Activated CD4-positive, alpha-beta memory T cell treated with anti-CD3 and anti-CD28 coated beads for 36 hours (primary cell): ENCODE measurements at regions of chrX and their contacts with region 1.

Region 1: DNA sequence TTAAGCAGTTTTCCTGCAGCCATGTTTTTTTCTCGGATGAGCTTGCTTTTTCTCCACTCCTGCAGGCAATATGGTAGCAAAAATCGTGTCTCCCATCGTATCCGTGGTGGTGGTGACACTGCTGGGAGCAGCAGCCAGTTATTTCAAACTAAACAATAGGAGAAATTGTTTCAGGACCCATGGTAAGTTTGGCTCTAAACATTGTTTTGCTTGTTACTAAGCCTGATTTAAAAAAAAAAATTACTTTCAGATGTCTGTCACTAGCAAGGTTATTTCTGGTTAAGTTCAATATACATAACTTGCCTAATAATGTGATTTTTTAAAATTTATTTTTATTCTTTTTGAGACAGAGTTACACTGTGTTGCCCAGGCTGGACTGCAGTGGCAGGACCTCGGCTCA is 17.5 kb upstream of the GYG2 start:
- DNase-seq: no peak
- H3K4me3 Mint-ChIP-seq: no peak overlapping the region
- H3K27ac Mint-ChIP-seq: no peak overlapping the region
- H3K4me1 Mint-ChIP-seq: peaks cover 7% of the 10 kb centered on the region
- H3K27me3 Mint-ChIP-seq: no peaks in the 10 kb centered on the region

Region 2: DNA sequence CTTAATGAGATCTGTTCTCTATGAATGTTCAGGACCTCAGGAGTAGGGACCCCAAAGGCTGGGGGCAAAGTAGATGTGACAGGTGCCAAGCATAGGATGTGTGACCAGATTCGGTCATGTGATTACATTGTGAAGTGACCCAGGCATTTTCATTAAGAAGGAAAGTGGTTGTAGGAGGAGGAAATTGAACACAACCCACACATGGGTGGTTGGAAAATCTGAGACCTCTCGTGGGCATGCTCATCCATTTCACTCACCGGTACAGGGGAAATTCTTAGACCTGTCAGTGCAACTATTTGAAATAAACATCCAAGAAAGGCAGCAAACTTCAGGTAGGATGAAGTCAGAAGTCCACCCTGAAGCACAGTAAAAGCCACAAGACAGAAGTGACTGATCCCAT is 163.6 kb before region 1 on chrX:
- CTCF ChIA-PET with region 1: no interaction called
- POLR2A ChIA-PET with region 1: no interaction called
- intact Hi-C with region 1: loop called (anchors 1 kb)
- DNase-seq: peak; percentile 56
- H3K4me3 Mint-ChIP-seq: no peak overlapping the region
- H3K27ac Mint-ChIP-seq: peak overlapping the region; percentile 40
- H3K4me1 Mint-ChIP-seq: peaks cover 18% of the 10 kb centered on the region
- H3K27me3 Mint-ChIP-seq: no peaks in the 10 kb centered on the region

Region 3: DNA sequence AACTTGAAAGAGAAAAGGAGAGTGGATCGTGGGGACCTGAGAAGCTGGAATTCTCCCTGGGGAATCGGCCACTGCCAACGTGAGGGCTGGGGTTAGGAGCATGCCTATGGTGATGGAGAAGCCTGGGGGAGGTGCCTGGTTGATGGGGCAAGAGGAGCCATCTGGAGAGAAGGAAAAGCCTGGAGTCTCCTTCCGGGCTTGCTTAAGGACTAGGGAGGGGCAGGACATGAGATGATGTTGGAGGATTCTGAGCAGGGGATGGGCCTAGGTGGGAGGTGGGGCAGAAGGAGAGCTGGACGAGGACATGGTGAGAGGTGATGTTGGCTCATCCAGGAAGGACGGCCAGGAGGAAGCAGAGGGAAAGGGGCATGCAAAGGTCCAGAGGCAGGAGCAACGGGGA is 17.5 kb before region 1 on chrX:
- CTCF ChIA-PET with region 1: no interaction called
- POLR2A ChIA-PET with region 1: no interaction called
- intact Hi-C with region 1: no loop called
- DNase-seq: no peak
- H3K4me3 Mint-ChIP-seq: no peak overlapping the region
- H3K27ac Mint-ChIP-seq: no peak overlapping the region
- H3K4me1 Mint-ChIP-seq: no peaks in the 10 kb centered on the region
- H3K27me3 Mint-ChIP-seq: no peaks in the 10 kb centered on the region

Region 4: GRCh38 chrX:2828344-2828958 is 17.2 kb after region 1 on chrX and contains the start of gene GYG2:
- CTCF ChIA-PET with region 1: no interaction called
- POLR2A ChIA-PET with region 1: no interaction called
- intact Hi-C with region 1: no loop called
- DNase-seq: no peak
- H3K4me3 Mint-ChIP-seq: no peak within 1 kb of the TSS
- H3K27ac Mint-ChIP-seq: no peak within 1 kb of the TSS
- H3K4me1 Mint-ChIP-seq: no peaks in the 10 kb centered on the region
- H3K27me3 Mint-ChIP-seq: peaks cover 11% of the 10 kb centered on the region
- total RNA-seq, gene GYG2: not detected